Endothelial cell of umbilical vein (primary cell): ENCODE measurements at regions of chr3 and their contacts with region 1.

Region 1: GRCh38 chr3:105366326-105367062 is at the start of gene ALCAM:
- DNase-seq: peak; percentile 99
- H3K4me3 ChIP-seq: peak within 1 kb of the TSS; percentile 49 to 83 (median 80)
- H3K27ac ChIP-seq: peak within 1 kb of the TSS; percentile 96
- H3K4me1 ChIP-seq: peaks cover 46% of the 10 kb centered on the region
- H3K27me3 ChIP-seq: no peaks in the 10 kb centered on the region
- CTCF ChIP-seq: peak; percentile 75 to 78
- POLR2A ChIP-seq: no peak
- total RNA-seq, gene ALCAM: 118 and 138 TPM in 2 replicates

Region 2: GRCh38 chr3:104273046-104273649 is 1093.3 kb before region 1 on chr3:
- CTCF ChIA-PET with region 1: interaction called, 9 read pairs
- POLR2A ChIA-PET with region 1: no interaction called
- dilution Hi-C with region 1: no loop called
- intact Hi-C with region 1: loop called (anchors 1 kb)
- DNase-seq: peak; percentile 34
- H3K4me3 ChIP-seq: no peak overlapping the region
- H3K27ac ChIP-seq: no peak overlapping the region
- H3K4me1 ChIP-seq: no peaks in the 10 kb centered on the region
- H3K27me3 ChIP-seq: peaks cover 0 to 2% of the 10 kb centered on the region in 2 experiments
- CTCF ChIP-seq: peak; percentile 47 to 57
- POLR2A ChIP-seq: no peak

Region 3: DNA sequence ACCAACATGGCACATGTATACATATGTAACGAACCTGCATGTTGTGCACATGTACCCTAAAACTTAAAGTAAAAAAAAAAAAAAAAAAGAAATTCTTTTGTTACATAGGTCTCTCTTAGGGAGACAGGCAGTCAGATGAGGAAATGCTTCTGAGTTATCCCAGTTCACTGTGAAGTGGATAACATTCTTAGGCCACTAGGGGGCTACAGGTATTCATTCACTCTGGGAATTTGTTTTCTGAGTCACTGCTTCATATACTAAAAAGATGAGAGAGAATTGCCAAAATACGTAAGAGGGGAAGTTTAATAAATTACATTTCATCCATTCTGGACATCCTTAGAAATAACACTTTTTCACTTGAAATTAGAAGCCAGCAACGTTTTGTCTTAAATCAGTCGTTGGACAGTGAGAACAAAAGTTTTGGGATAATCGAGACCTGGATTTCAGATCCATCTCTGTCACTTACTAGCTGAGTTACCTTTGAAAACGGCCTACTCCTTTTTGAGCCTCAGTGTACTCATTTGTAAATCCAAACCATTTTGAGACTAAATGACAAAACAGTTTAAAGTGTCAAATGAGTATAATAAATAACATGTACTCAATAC is 738.2 kb before region 1 on chr3:
- CTCF ChIA-PET with region 1: interaction called, 7 read pairs
- POLR2A ChIA-PET with region 1: no interaction called
- dilution Hi-C with region 1: no loop called
- intact Hi-C with region 1: loop called (anchors 1 kb)
- DNase-seq: peak; percentile 66
- H3K4me3 ChIP-seq: no peak overlapping the region
- H3K27ac ChIP-seq: peak overlapping the region; percentile 61
- H3K4me1 ChIP-seq: peaks cover 14% of the 10 kb centered on the region
- H3K27me3 ChIP-seq: no peaks in the 10 kb centered on the region
- CTCF ChIP-seq: peak; percentile 58 to 61
- POLR2A ChIP-seq: no peak

Region 4: GRCh38 chr3:104939196-104939595 is 427.3 kb before region 1 on chr3:
- CTCF ChIA-PET with region 1: interaction called, 4 read pairs
- POLR2A ChIA-PET with region 1: no interaction called
- dilution Hi-C with region 1: no loop called
- intact Hi-C with region 1: loop called (anchors 1 kb)
- DNase-seq: peak; percentile 45
- H3K4me3 ChIP-seq: no peak overlapping the region
- H3K27ac ChIP-seq: no peak overlapping the region
- H3K4me1 ChIP-seq: no peaks in the 10 kb centered on the region
- H3K27me3 ChIP-seq: no peaks in the 10 kb centered on the region
- CTCF ChIP-seq: no peak
- POLR2A ChIP-seq: no peak

Region 5: DNA sequence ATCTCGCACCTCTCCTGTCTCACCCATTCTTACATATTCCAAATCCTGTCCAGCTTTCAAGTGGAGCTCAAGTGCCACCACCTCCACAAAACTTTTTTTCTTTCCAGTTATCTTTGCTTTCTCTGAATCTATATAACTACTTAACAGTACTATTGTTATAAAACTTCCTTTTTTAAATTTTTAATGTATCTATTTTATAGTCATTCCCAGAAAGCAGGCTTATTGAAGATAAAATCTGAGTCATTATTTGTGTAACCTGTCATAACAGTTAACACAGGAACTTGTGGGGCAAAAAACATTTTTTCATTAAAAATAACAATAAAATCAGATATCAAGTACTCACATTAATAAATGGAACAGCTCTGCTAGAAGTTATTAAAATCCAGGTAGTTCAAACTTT is 73.1 kb before region 1 on chr3:
- CTCF ChIA-PET with region 1: interaction called, 9 read pairs
- POLR2A ChIA-PET with region 1: no interaction called
- dilution Hi-C with region 1: no loop called
- intact Hi-C with region 1: loop called (anchors 1 kb)
- DNase-seq: peak; percentile 63
- H3K4me3 ChIP-seq: no peak overlapping the region
- H3K27ac ChIP-seq: peak overlapping the region; percentile 29
- H3K4me1 ChIP-seq: peaks cover 13% of the 10 kb centered on the region
- H3K27me3 ChIP-seq: no peaks in the 10 kb centered on the region
- CTCF ChIP-seq: no peak
- POLR2A ChIP-seq: no peak

Region 6: GRCh38 chr3:106609666-106610301 is 1243.3 kb after region 1 on chr3:
- CTCF ChIA-PET with region 1: interaction called, 9 read pairs
- POLR2A ChIA-PET with region 1: no interaction called
- dilution Hi-C with region 1: no loop called
- intact Hi-C with region 1: loop called (anchors 1 kb)
- DNase-seq: peak; percentile 92
- H3K4me3 ChIP-seq: no peak overlapping the region
- H3K27ac ChIP-seq: no peak overlapping the region
- H3K4me1 ChIP-seq: peaks cover 18% of the 10 kb centered on the region
- H3K27me3 ChIP-seq: no peaks in the 10 kb centered on the region
- CTCF ChIP-seq: peak; percentile 75 to 90
- POLR2A ChIP-seq: no peak